Heart left ventricle (tissue), 16 donors: ENCODE measurements at regions of chr9 and their contacts with region 1.

Region 1: DNA sequence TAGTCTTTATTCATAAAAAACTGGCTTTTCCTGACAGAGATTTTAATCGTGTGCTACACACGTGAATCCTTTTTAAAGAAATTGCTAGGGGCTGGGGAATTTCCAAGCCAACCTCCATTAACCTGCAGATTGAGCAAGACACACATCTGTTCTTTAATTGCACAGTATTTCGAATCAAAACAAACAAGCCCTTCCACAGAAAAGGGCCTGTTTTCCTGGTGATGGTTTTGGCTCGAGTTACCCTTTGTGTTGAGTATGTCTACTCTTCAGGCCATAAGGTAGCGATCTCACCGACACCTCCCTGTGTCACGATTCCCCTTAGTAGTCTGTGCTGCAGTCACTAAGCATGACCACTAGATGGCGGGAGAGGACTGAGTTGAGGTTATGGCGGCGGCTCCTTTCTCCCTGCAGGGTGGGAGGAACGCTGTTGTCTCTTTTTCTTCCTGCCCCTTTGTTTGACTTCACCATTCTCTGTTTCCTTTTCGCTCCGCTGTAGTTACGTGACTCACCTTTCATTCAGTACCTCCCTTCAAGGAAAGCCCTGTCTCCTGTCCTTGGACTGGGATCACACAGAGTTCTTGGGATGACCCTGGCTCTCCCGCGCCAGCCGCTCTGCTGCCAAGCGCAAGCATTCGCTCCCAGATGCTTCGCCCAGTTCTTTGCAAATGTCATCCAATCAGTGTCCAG is 137.1 kb upstream of the SLC24A2 start:
- DNase-seq: peak; percentile 64 to 70 (median 69)
- ATAC-seq: peak; percentile 83 to 96 (median 94)
- H3K4me3 ChIP-seq: peak overlapping the region in 11 of 12 donors; percentile 14 to 54 (median 41)
- H3K27ac ChIP-seq: no peak overlapping the region
- H3K4me1 ChIP-seq: peaks cover 0 to 8% (median 0%) of the 10 kb centered on the region in 12 donors
- H3K27me3 ChIP-seq: peaks cover 0 to 4% (median 0%) of the 10 kb centered on the region in 9 donors
- CTCF ChIP-seq: peak; percentile 92 to 99 (median 96)
- POLR2A ChIP-seq: no peak

Region 2: DNA sequence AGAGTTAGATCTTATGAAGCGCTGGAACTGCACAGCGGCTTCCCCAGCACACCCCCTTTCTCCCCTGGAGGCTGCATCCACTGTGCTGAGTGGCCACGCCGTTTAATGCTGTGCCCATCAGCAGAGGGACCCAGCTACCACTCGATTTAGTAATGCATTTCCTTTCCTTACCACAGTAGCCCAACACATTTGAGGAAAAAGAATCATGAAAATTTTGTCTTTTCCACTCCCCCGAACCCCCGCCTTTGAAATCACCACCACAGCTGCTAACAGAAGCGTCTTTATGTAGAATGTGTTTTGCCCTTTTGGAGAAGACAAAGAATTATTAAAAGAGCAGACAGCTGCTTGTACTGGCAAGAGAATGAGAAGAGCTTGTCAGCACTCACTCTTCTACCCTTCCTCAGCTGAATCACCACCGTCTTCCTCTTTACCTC is 444.0 kb before region 1 on chr9:
- intact Hi-C with region 1: loop called in 1 of 10 experiments (anchors 10 kb)
- DNase-seq: no peak
- ATAC-seq: peak in 3 of 4 donors; percentile 38 to 52 (median 42)
- H3K4me3 ChIP-seq: no peak overlapping the region
- H3K27ac ChIP-seq: peak overlapping the region in 5 of 12 donors; percentile 30 to 52 (median 45)
- H3K4me1 ChIP-seq: peaks cover 0 to 7% (median 0%) of the 10 kb centered on the region in 12 donors
- H3K27me3 ChIP-seq: peaks cover 0 to 3% (median 0%) of the 10 kb centered on the region in 9 donors
- CTCF ChIP-seq: no peak
- POLR2A ChIP-seq: no peak

Region 3: GRCh38 chr9:19879062-19879461 is 46.9 kb before region 1 on chr9:
- intact Hi-C with region 1: no loop called
- DNase-seq: no peak
- ATAC-seq: no peak
- H3K4me3 ChIP-seq: no peak overlapping the region
- H3K27ac ChIP-seq: no peak overlapping the region
- H3K4me1 ChIP-seq: no peaks in the 10 kb centered on the region
- H3K27me3 ChIP-seq: no peaks in the 10 kb centered on the region
- CTCF ChIP-seq: no peak
- POLR2A ChIP-seq: no peak

Region 4: GRCh38 chr9:19946441-19947109 is 20.6 kb after region 1 on chr9:
- intact Hi-C with region 1: no loop called
- DNase-seq: no peak
- ATAC-seq: no peak
- H3K4me3 ChIP-seq: no peak overlapping the region
- H3K27ac ChIP-seq: no peak overlapping the region
- H3K4me1 ChIP-seq: no peaks in the 10 kb centered on the region
- H3K27me3 ChIP-seq: peaks cover 0 to 5% (median 0%) of the 10 kb centered on the region in 9 donors
- CTCF ChIP-seq: peak in 6 of 12 donors; percentile 6 to 35 (median 20)
- POLR2A ChIP-seq: no peak

Region 5: DNA sequence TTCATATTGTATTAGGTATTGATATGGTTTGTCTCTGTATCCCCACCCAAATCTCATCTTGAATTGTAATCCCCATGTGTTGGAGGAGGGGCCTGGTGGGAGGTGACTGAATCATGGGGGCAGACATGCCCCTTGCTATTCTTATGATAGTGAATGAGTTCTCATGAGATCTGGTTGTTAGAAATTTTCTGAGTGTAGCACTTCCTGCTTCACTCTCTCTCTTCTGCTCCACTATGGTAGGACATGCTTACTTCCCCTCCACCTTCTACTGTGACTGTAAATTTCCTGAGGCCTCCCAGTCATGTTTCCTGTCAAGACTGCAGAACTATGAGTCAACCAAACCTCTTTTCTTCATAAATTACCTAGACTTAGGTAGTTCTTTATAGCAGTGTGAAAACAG is 50.3 kb after region 1 on chr9:
- intact Hi-C with region 1: no loop called
- DNase-seq: no peak
- ATAC-seq: no peak
- H3K4me3 ChIP-seq: no peak overlapping the region
- H3K27ac ChIP-seq: no peak overlapping the region
- H3K4me1 ChIP-seq: no peaks in the 10 kb centered on the region
- H3K27me3 ChIP-seq: no peaks in the 10 kb centered on the region
- CTCF ChIP-seq: no peak
- POLR2A ChIP-seq: no peak

Region 6: DNA sequence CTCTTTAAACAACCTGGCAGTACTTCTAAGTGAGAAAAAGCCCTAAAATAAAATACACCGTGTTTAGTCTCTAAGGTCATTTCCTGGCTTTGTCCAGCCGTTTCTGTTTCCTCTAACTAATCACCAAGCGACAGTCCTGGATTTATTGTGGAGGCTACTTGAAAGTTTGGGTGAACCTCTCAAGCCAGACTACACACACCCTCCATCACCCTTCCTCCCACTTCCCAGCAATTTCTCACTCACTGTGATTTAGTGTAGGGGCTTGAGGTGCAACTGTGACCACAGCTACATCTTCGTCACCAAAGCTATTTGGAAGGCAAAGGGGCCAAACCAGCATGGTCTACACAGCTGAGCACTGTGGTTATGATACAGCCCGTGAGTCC is 102.9 kb after region 1 on chr9:
- intact Hi-C with region 1: loop called in 1 of 10 experiments (anchors 5 kb)
- DNase-seq: peak in 2 of 5 donors; percentile 14 to 22
- ATAC-seq: peak; percentile 57 to 79 (median 70)
- H3K4me3 ChIP-seq: no peak overlapping the region
- H3K27ac ChIP-seq: peak overlapping the region in 10 of 12 donors; percentile 4 to 89 (median 40)
- H3K4me1 ChIP-seq: peaks cover 0 to 26% (median 5%) of the 10 kb centered on the region in 12 donors
- H3K27me3 ChIP-seq: no peaks in the 10 kb centered on the region
- CTCF ChIP-seq: no peak
- POLR2A ChIP-seq: no peak

Region 7: GRCh38 chr9:20331095-20331685 is 405.2 kb after region 1 on chr9:
- intact Hi-C with region 1: loop called in 1 of 10 experiments (anchors 10 kb)
- DNase-seq: no peak
- ATAC-seq: no peak
- H3K4me3 ChIP-seq: no peak overlapping the region
- H3K27ac ChIP-seq: no peak overlapping the region
- H3K4me1 ChIP-seq: no peaks in the 10 kb centered on the region
- H3K27me3 ChIP-seq: no peaks in the 10 kb centered on the region
- CTCF ChIP-seq: no peak
- POLR2A ChIP-seq: no peak

Region 8: GRCh38 chr9:20384642-20385041 is 458.7 kb after region 1 on chr9:
- intact Hi-C with region 1: no loop called
- DNase-seq: no peak
- ATAC-seq: no peak
- H3K4me3 ChIP-seq: no peak overlapping the region
- H3K27ac ChIP-seq: no peak overlapping the region
- H3K4me1 ChIP-seq: peaks cover 0 to 10% (median 0%) of the 10 kb centered on the region in 12 donors
- H3K27me3 ChIP-seq: no peaks in the 10 kb centered on the region
- CTCF ChIP-seq: no peak
- POLR2A ChIP-seq: no peak

Region 9: DNA sequence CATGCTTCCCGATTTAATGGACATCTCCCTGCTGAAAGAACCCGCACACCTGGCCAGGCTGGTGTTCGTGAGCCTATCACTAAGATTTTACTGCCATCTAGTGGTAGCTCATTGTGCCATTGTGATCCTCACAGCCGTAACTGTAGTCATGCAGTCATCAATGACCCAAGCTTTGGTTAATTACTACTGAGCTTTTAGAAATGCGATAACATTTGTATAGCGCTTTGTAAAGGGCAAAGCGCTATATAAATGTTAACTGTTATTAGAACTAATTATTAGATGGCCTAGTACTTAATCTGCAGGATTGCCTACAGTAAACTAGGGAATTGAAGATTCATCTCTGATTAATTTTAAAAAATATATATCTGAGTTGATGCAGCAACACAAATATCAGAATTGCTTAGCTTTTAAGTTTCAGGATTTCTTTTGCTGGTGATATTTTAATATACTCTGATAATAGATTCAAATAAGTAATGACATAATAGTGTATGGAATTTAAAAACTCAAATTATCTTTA is 1015.3 kb after region 1 on chr9:
- intact Hi-C with region 1: loop called (anchors 2 to 5 kb)
- DNase-seq: peak in 3 of 5 donors; percentile 30 to 37 (median 34)
- ATAC-seq: peak; percentile 82 to 93 (median 88)
- H3K4me3 ChIP-seq: no peak overlapping the region
- H3K27ac ChIP-seq: no peak overlapping the region
- H3K4me1 ChIP-seq: peaks cover 0 to 6% (median 0%) of the 10 kb centered on the region in 12 donors
- H3K27me3 ChIP-seq: no peaks in the 10 kb centered on the region
- CTCF ChIP-seq: peak; percentile 76 to 94 (median 86)
- POLR2A ChIP-seq: no peak